Ovary (tissue), 10 donors: ENCODE measurements at regions of chr10 and their contacts with region 1.

Region 1: GRCh38 chr10:70461215-70461986 is 17.2 kb upstream of the PALD1 start:
- DNase-seq: peak; percentile 48 to 73 (median 70)
- H3K4me3 ChIP-seq: no peak overlapping the region
- H3K27ac ChIP-seq: no peak overlapping the region
- H3K4me1 ChIP-seq: peaks cover 7% of the 10 kb centered on the region
- H3K27me3 ChIP-seq: no peaks in the 10 kb centered on the region
- CTCF ChIP-seq: peak; percentile 71 to 78 (median 72)
- EP300 ChIP-seq: no peak
- POLR2A ChIP-seq: no peak

Region 2: DNA sequence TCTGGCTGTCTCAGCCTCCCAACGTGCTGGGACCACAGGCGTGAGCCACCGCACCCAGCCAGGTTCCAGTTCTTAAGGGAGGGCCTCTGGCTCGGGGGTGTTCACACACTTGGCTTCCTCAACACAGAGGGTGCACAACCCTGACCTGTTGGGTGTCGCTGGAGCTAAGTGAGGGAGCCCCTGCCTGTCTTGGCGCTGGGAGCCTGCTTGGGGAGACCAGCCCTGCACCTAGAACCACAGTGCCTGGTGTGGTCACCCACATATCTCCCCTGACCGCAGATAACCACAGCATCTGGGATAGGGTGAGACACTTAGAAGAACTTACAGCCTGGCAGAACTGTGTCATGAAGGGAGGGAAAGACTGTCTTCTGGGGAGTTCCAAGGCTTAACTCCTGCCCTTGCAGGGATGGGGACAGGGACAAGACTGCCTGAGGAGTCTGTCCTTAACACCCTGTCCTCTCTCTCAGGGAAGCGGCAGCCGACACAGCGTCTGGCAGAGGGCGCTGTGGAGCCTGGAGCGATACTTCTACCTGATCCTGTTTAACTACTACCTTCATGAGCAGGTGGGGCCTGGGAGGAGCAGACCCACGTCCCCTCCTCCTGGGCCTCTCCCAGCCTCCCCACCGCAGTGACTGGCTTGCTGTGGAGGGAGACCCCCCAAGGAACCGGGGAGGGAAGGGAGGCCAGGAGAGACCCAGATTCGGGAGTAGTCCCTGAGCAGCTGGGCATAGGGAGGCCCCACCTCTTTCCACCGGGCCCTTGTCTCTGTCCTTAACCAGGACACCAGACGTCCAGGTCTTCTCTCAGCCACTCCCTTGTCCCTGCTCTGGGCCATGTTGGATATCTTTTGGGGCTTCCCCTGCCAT is 76.2 kb after region 1 on chr10:
- intact Hi-C with region 1: loop called in 2 of 4 experiments (anchors 5 kb)
- DNase-seq: no peak
- H3K4me3 ChIP-seq: no peak overlapping the region
- H3K27ac ChIP-seq: no peak overlapping the region
- H3K4me1 ChIP-seq: no peaks in the 10 kb centered on the region
- H3K27me3 ChIP-seq: no peaks in the 10 kb centered on the region
- CTCF ChIP-seq: no peak
- EP300 ChIP-seq: no peak
- POLR2A ChIP-seq: no peak

Region 3: DNA sequence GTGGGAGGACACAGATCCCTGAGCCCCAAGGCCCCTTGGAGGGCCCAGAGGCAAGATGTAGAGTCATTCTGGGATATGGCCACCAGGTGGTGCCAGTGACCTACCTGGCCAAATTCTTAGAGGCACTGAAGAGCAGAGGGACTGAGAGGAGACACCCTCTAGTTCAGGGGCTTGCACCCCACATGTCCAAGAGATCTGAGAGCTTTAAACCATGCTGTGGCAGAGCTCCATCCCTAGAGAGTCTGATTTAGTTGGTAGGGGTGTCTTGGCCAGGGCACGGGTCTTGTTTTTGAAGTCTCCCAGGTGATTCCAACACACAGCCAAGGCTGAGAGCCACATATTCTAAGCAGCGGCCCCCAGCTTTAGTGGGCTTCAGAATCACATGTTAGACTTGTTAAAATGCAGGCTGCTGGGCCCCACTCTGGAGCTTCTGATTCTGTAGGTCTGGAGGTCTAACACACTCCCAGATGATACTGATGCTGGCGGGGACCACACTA is 88.6 kb after region 1 on chr10:
- intact Hi-C with region 1: loop called in 1 of 4 experiments (anchors 5 kb)
- DNase-seq: peak; percentile 49 to 78 (median 73)
- H3K4me3 ChIP-seq: no peak overlapping the region
- H3K27ac ChIP-seq: no peak overlapping the region
- H3K4me1 ChIP-seq: peaks cover 3% of the 10 kb centered on the region
- H3K27me3 ChIP-seq: no peaks in the 10 kb centered on the region
- CTCF ChIP-seq: peak; percentile 56 to 77 (median 63)
- EP300 ChIP-seq: no peak
- POLR2A ChIP-seq: no peak